Activated CD4-positive, alpha-beta memory T cell treated with anti-CD3 and anti-CD28 coated beads for 36 hours (primary cell): ENCODE measurements at regions of chr1 and their contacts with region 1.

Region 1: GRCh38 chr1:228165372-228166169 is at the start of gene IBA57:
- DNase-seq: peak; percentile 100
- H3K4me3 Mint-ChIP-seq: peak within 1 kb of the TSS; percentile 81
- H3K27ac Mint-ChIP-seq: peak within 1 kb of the TSS; percentile 89
- H3K4me1 Mint-ChIP-seq: peaks cover 33% of the 10 kb centered on the region
- H3K27me3 Mint-ChIP-seq: no peaks in the 10 kb centered on the region
- total RNA-seq, gene IBA57: 3.8 to 4.8 TPM

Region 2: DNA sequence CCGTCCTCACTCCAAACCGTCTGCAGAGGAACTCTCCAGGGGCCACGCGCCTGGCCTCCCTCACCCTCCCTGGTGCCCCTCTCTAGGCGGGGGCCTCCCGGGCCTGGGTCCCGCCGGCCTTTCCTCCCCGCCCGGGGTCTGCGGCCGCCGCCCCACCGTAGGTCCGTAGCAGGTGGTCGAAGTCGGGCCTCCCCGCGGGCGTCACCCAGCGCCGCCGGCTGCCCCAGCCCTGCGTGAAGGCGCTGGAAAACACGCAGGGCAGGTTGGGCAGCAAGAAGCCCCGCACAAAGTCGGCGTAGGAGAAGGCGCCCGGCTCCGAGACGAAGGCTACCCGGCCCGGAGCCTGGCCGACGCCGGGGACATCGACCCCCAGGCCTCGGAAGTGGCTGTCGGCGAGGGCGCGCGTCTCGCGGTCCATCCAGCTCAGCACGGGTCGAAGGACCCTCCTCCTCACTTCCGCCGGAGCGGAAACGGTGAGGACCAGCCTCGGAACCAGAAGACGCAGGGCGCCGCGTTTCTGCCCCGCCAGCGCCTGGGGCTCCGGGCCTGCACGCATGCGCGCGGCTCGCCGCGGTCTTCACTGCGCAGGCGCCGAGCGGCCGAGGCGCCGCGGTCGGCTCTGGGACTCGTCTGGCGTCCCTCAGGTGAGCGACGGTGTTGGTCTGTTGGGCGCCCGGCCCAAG is 430.6 kb before region 1 on chr1 and contains the starts of genes JMJD4 and SNAP47:
- CTCF ChIA-PET with region 1: no interaction called
- POLR2A ChIA-PET with region 1: no interaction called
- intact Hi-C with region 1: loop called (anchors 10 kb)
- DNase-seq: peak; percentile 95
- H3K4me3 Mint-ChIP-seq: peak within 1 kb of the TSS; percentile 94
- H3K27ac Mint-ChIP-seq: peak within 1 kb of the TSS; percentile 79
- H3K4me1 Mint-ChIP-seq: peaks cover 40% of the 10 kb centered on the region
- H3K27me3 Mint-ChIP-seq: no peaks in the 10 kb centered on the region
- total RNA-seq, gene JMJD4: 15.2 to 16.1 TPM
- total RNA-seq, gene SNAP47: 30.9 to 32.5 TPM

Region 3: GRCh38 chr1:227999056-227999930 is 166.3 kb before region 1 on chr1:
- CTCF ChIA-PET with region 1: interaction called, 15 read pairs
- POLR2A ChIA-PET with region 1: no interaction called
- intact Hi-C with region 1: no loop called
- DNase-seq: peak; percentile 83
- H3K4me3 Mint-ChIP-seq: no peak overlapping the region
- H3K27ac Mint-ChIP-seq: no peak overlapping the region
- H3K4me1 Mint-ChIP-seq: no peaks in the 10 kb centered on the region
- H3K27me3 Mint-ChIP-seq: peaks cover 22% of the 10 kb centered on the region

Region 4: GRCh38 chr1:228102791-228103620 is 62.6 kb before region 1 on chr1 and contains the start of gene C1orf35:
- CTCF ChIA-PET with region 1: interaction called, 7 read pairs
- POLR2A ChIA-PET with region 1: interaction called, 3 read pairs
- intact Hi-C with region 1: loop called (anchors 1 kb)
- DNase-seq: peak; percentile 96
- H3K4me3 Mint-ChIP-seq: peak within 1 kb of the TSS; percentile 91
- H3K27ac Mint-ChIP-seq: peak within 1 kb of the TSS; percentile 88
- H3K4me1 Mint-ChIP-seq: peaks cover 28% of the 10 kb centered on the region
- H3K27me3 Mint-ChIP-seq: no peaks in the 10 kb centered on the region
- total RNA-seq, gene C1orf35: 21.9 to 22.1 TPM

Region 5: GRCh38 chr1:228131766-228132165 is 33.8 kb before region 1 on chr1:
- CTCF ChIA-PET with region 1: interaction called, 46 read pairs
- POLR2A ChIA-PET with region 1: interaction called, 6 read pairs
- intact Hi-C with region 1: loop called (anchors 5 kb)
- DNase-seq: no peak
- H3K4me3 Mint-ChIP-seq: no peak overlapping the region
- H3K27ac Mint-ChIP-seq: no peak overlapping the region
- H3K4me1 Mint-ChIP-seq: peaks cover 2% of the 10 kb centered on the region
- H3K27me3 Mint-ChIP-seq: peaks cover 11% of the 10 kb centered on the region

Region 6: GRCh38 chr1:228212966-228213844 is 47.6 kb after region 1 on chr1:
- CTCF ChIA-PET with region 1: no interaction called
- POLR2A ChIA-PET with region 1: no interaction called
- intact Hi-C with region 1: no loop called
- DNase-seq: peak; percentile 94
- H3K4me3 Mint-ChIP-seq: peak overlapping the region; percentile 82
- H3K27ac Mint-ChIP-seq: peak overlapping the region; percentile 54
- H3K4me1 Mint-ChIP-seq: peaks cover 2% of the 10 kb centered on the region
- H3K27me3 Mint-ChIP-seq: no peaks in the 10 kb centered on the region

Region 7: GRCh38 chr1:228405987-228406265 is 240.4 kb after region 1 on chr1:
- CTCF ChIA-PET with region 1: no interaction called
- POLR2A ChIA-PET with region 1: interaction called, 9 read pairs
- intact Hi-C with region 1: loop called (anchors 10 kb)
- DNase-seq: no peak
- H3K4me3 Mint-ChIP-seq: peak overlapping the region; percentile 83
- H3K27ac Mint-ChIP-seq: peak overlapping the region; percentile 71
- H3K4me1 Mint-ChIP-seq: peaks cover 43% of the 10 kb centered on the region
- H3K27me3 Mint-ChIP-seq: no peaks in the 10 kb centered on the region